ENCODE measurements at regions of chr6 and their contacts with region 1.

Region 1: DNA sequence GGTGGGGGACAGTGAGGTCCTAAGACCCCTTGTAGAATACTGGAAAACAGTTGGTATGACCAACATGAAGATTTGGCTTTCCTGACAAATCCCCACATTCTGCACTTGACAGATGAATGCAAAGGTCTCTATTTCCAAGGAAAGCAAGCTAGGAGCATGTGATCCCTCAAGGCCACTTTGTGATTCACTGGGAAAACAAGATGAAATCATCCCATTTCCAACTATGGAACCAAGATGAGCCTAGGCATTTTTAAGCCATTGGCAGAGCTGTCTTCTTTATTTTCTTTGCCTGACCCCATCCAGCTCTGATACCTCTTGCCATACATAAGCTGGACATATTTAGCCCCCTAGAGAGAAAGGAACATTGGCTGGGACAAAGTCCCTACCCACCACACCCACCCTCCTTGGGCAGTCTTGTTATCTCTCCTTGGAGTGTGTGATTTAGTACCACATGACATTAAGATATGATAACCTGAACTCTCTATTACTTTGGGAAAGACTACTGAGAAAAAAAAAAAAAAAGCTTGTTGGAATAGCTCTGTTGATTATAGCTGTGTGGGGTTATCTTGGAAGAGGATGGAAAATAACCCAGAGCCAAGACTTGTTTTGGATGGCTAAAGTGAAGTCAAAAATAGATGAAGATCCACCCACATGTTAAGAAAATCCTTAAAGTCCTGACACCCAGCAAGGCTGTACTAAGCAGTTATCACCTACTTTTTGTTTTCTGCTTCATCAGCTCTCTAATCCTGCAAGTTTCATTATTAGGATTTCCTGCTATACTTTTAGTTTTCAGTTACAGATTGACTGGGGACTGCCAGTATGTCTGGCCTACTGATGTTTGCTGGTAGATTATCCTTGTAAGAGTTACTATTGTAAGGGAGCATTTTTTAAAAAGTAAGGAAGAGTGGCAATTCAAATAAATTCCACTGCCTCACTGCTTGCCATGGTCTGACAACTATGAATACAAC is 90.1 kb upstream of the PREP start:
- DNase-seq: no peak
- H3K4me3 ChIP-seq: no peak overlapping the region
- H3K27ac ChIP-seq: no peak overlapping the region
- H3K4me1 ChIP-seq: no peaks in the 10 kb centered on the region
- H3K27me3 ChIP-seq: no peaks in the 10 kb centered on the region
- CTCF ChIP-seq: no peak
- POLR2A ChIP-seq: no peak

Region 2: GRCh38 chr6:105601541-105602236 is 108.7 kb after region 1 on chr6:
- intact Hi-C with region 1: loop called (anchors 10 kb)
- DNase-seq: peak; percentile 79
- H3K4me3 ChIP-seq: no peak overlapping the region
- H3K27ac ChIP-seq: peak overlapping the region; percentile 36 to 52
- H3K4me1 ChIP-seq: peaks cover 7% of the 10 kb centered on the region
- H3K27me3 ChIP-seq: no peaks in the 10 kb centered on the region
- CTCF ChIP-seq: no peak
- POLR2A ChIP-seq: no peak

Region 3: DNA sequence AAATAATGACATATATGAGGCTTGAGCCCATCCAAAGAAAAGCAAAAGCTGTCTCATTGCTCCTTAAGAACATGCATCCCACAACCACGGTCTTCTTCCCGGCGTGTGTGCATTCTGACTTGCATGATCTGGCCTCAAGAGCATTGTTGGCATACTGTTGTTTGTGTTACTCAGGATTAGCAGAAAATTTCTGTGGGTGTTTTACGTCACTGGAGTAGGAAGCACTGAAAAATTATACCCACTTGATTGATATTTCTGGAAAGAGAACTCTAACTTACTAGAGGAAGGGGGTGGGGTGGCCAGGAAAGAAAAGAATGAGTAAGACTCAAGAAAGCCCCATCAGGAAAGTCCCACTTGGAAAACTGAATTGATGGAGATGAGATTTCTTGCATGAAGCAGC is 267.0 kb after region 1 on chr6:
- intact Hi-C with region 1: no loop called
- DNase-seq: no peak
- H3K4me3 ChIP-seq: no peak overlapping the region
- H3K27ac ChIP-seq: no peak overlapping the region
- H3K4me1 ChIP-seq: no peaks in the 10 kb centered on the region
- H3K27me3 ChIP-seq: no peaks in the 10 kb centered on the region
- CTCF ChIP-seq: no peak
- POLR2A ChIP-seq: no peak